ENCODE measurements at regions of chr10 and their contacts with region 1.

Region 1: GRCh38 chr10:114856544-114857282 is 35.1 kb downstream of the FHIP2A start:
- DNase-seq: no peak
- H3K4me3 Mint-ChIP-seq: peak overlapping the region; percentile 23
- H3K27ac Mint-ChIP-seq: peak overlapping the region; percentile 44
- H3K4me1 Mint-ChIP-seq: peaks cover 25% of the 10 kb centered on the region
- H3K27me3 Mint-ChIP-seq: no peaks in the 10 kb centered on the region

Region 2: DNA sequence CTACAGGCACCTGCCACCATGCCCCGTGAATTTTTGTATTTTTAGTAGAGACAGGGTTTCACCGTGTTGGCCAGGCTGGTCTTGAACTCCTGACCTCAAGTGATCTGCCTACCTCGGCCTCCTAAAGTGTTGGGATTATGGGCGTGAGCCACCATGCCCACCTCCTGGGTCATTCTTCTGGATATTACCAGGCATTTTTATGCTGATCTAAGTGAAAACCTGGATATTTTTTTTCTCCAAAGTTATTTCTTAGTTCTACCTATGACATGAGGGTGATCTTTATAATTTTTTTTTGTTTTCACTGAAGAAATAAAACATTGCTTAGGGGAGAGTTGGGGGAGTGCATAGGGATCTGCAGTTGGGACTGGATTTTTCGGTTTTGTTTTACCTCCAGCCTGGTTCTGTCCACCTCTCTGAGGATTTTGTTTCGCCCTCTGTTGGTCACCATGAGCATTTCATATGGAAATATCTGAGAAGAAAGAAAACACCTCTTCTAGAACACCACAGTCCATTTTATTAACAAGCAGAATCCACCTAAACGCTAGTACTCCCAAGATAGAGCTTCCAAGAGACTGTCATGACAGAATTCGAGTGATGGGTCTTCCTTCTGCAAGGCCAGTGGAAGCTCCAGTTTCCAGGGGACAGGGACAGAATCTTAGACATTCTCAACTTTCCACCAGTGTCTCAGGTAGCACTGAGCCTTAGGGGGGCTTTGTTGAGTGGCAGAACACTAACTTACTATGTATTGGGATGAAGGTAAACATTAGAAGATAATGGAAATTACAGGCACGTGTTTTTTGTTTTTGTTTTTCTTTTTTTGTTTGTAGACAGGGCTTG is 419.0 kb before region 1 on chr10:
- CTCF ChIA-PET with region 1: no interaction called
- POLR2A ChIA-PET with region 1: no interaction called
- intact Hi-C with region 1: no loop called
- DNase-seq: no peak
- H3K4me3 Mint-ChIP-seq: no peak overlapping the region
- H3K27ac Mint-ChIP-seq: no peak overlapping the region
- H3K4me1 Mint-ChIP-seq: no peaks in the 10 kb centered on the region
- H3K27me3 Mint-ChIP-seq: no peaks in the 10 kb centered on the region

Region 3: GRCh38 chr10:114577133-114577532 is 279.6 kb before region 1 on chr10:
- CTCF ChIA-PET with region 1: no interaction called
- POLR2A ChIA-PET with region 1: no interaction called
- intact Hi-C with region 1: no loop called
- DNase-seq: no peak
- H3K4me3 Mint-ChIP-seq: no peak overlapping the region
- H3K27ac Mint-ChIP-seq: no peak overlapping the region
- H3K4me1 Mint-ChIP-seq: no peaks in the 10 kb centered on the region
- H3K27me3 Mint-ChIP-seq: no peaks in the 10 kb centered on the region

Region 4: DNA sequence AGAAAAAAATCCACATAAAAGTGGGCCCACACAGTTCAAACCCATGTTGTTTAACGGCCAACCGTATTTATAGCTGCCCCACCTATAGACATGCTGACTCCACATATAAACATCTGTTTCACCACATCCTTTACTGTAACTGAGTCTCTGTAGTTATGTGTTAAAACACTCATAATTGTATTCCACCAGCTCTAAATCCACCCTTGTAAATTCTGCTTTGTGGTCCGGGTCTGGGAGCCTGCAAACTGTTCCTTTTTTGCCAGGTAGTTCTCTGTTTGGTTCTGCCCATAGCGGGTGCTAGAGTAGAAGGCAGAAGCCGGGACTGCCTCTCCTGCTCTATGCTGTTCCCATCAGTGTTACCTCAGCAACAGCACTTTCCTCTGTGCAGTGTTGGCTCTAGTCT is 55.3 kb before region 1 on chr10:
- CTCF ChIA-PET with region 1: no interaction called
- POLR2A ChIA-PET with region 1: no interaction called
- intact Hi-C with region 1: loop called (anchors 2 kb)
- DNase-seq: peak; percentile 42
- H3K4me3 Mint-ChIP-seq: no peak overlapping the region
- H3K27ac Mint-ChIP-seq: no peak overlapping the region
- H3K4me1 Mint-ChIP-seq: peaks cover 17% of the 10 kb centered on the region
- H3K27me3 Mint-ChIP-seq: no peaks in the 10 kb centered on the region

Measured in activated CD4-positive, alpha-beta memory T cell treated with anti-CD3 and anti-CD28 coated beads for 36 hours (primary cell).